Heart left ventricle (tissue), 16 donors: ENCODE measurements at regions of chr12 and their contacts with region 1.

Region 1: GRCh38 chr12:7995266-7995963 is 37.1 kb upstream of the FOXJ2 start:
- DNase-seq: peak; percentile 83 to 88 (median 85)
- ATAC-seq: peak; percentile 95 to 100 (median 100)
- H3K4me3 ChIP-seq: no peak overlapping the region
- H3K27ac ChIP-seq: peak overlapping the region in 4 of 12 donors; percentile 11 to 58 (median 29)
- H3K4me1 ChIP-seq: peaks cover 0 to 23% (median 0%) of the 10 kb centered on the region in 12 donors
- H3K27me3 ChIP-seq: no peaks in the 10 kb centered on the region
- CTCF ChIP-seq: peak; percentile 80 to 92 (median 86)
- POLR2A ChIP-seq: no peak

Region 2: GRCh38 chr12:7859552-7859951 is 135.9 kb before region 1 on chr12:
- intact Hi-C with region 1: loop called (anchors 1 to 5 kb)
- DNase-seq: no peak
- ATAC-seq: no peak
- H3K4me3 ChIP-seq: no peak overlapping the region
- H3K27ac ChIP-seq: no peak overlapping the region
- H3K4me1 ChIP-seq: peaks cover 0 to 4% (median 0%) of the 10 kb centered on the region in 12 donors
- H3K27me3 ChIP-seq: peaks cover 0 to 11% (median 0%) of the 10 kb centered on the region in 9 donors
- CTCF ChIP-seq: no peak
- POLR2A ChIP-seq: no peak

Region 3: DNA sequence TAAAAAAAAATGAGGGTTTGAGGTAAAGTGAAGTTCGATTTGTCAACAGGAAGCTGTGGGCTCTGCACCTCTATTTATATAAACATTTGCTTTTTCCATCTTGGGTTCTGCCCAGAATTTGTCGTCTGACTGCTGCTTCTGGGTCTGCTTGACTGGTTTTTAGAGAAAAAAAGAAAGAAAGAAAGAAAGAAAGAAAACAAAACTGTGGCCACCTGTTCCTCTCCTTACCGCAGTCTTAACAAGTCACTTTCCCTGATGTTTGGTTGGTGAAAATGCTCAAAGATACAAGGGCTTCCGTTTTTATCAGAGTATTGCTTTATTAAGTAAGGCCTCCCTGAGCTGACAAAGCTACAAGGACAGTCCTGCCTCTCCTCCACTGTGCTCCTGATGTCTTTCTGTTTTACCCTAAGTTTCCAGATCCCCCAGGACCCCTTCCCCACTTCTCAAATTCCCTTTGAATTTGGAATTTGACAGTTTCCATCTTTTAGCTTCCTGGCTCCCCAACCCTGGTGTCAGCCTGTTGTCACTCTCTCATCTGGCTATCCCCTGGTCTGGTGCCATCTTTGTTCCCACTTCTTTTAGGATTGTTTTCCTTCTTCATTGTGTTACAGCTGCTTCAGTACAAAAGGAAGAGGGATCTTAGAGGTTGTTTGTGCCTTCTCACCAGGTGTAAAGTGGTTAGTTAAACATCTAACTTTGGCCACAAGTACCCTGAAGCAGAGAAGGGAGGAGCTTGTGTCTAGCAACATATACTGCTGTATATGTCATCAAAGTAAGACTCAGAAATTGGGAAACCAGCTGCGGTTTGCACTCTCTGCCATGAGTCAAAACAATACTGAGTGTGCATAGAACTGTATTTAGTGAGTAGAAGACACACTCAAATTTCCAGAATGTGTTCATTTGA is 649.2 kb after region 1 on chr12:
- intact Hi-C with region 1: no loop called
- DNase-seq: no peak
- ATAC-seq: no peak
- H3K4me3 ChIP-seq: no peak overlapping the region
- H3K27ac ChIP-seq: peak overlapping the region in 1 of 12 donors; percentile 62
- H3K4me1 ChIP-seq: no peaks in the 10 kb centered on the region
- H3K27me3 ChIP-seq: no peaks in the 10 kb centered on the region
- CTCF ChIP-seq: no peak
- POLR2A ChIP-seq: no peak